Activated CD4-positive, alpha-beta memory T cell treated with anti-CD3 and anti-CD28 coated beads, Interleukin-2, amount 10 ng/mL, durations not matched to agents 7 days and 5 days (primary cell): ENCODE measurements at regions of chr10 and their contacts with region 1.

Region 1: DNA sequence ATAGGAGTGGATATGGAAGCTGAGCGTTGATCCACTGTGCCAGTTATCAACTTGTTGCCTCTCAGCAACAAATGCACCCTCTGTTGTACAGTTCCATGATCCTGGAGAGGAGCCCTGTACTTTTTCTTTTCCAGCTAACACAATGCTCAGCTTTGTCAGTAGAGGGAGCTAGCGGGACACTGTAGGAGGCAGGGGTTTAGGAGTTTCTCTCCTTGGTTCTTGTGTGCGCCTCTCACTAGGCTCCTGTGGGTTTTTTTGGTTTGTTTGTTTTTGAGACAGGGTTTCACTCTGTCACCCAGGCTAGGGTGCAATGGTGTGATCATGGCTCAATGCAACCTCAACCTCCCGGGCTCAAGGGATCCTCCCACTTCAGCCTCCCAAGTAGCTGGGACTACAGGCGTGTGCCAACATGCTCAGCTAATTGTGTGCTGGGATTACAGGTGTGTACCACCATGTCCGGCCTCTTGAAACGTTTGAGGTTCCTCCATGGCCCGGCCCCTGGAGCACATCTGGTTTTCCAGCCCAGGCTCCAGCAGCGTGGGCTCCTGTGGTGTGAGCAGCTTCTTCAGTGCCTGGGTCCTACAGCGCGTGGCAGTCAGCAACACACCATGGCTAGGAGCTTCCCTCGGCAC is 12.0 kb upstream of the MARVELD1 start:
- DNase-seq: peak; percentile 49
- H3K4me3 Mint-ChIP-seq: no peak overlapping the region
- H3K27ac Mint-ChIP-seq: no peak overlapping the region
- H3K4me1 Mint-ChIP-seq: peaks cover 1% of the 10 kb centered on the region
- H3K27me3 Mint-ChIP-seq: peaks cover 13% of the 10 kb centered on the region

Region 2: GRCh38 chr10:97686962-97687784 is 14.4 kb before region 1 on chr10 and contains the start of gene AVPI1:
- CTCF ChIA-PET with region 1: interaction called, 35 read pairs
- POLR2A ChIA-PET with region 1: interaction called, 8 read pairs
- DNase-seq: peak; percentile 95
- H3K4me3 Mint-ChIP-seq: peak within 1 kb of the TSS; percentile 75
- H3K27ac Mint-ChIP-seq: peak within 1 kb of the TSS; percentile 54
- H3K4me1 Mint-ChIP-seq: peaks cover 17% of the 10 kb centered on the region
- H3K27me3 Mint-ChIP-seq: peaks cover 3% of the 10 kb centered on the region
- total RNA-seq, gene AVPI1: 1.8 to 1.9 TPM

Region 3: DNA sequence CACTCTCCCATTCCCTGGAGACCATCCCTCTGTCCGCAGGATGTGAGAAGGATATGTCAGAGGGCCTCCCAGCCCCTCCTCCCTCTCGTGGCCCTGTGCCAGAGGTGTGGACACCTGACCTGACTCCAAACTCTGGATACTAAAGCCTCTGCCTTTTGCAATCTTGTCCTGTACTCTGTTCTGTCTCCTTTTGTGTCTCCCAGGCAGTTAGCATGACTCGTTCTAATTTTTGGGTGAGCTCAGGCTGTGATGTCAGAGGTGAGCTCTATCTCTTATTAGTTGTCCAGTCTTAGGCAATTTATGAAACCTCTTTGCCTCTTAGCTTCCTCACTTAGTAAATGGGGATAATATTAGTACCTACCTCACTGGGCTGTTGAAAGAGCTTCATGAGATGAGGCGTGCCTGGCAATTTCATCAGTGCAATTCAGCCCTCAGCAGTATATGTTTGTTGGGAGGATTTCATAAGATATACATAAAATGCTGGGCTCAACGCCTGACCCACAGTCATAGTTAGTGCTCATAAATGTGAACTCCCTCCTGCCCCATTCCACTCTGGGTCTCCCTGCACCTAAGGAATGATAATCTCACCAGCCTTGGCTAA is 22.9 kb after region 1 on chr10:
- CTCF ChIA-PET with region 1: interaction called, 111 read pairs
- POLR2A ChIA-PET with region 1: no interaction called
- DNase-seq: no peak
- H3K4me3 Mint-ChIP-seq: no peak overlapping the region
- H3K27ac Mint-ChIP-seq: no peak overlapping the region
- H3K4me1 Mint-ChIP-seq: peaks cover 6% of the 10 kb centered on the region
- H3K27me3 Mint-ChIP-seq: peaks cover 5% of the 10 kb centered on the region

Region 4: GRCh38 chr10:97736902-97737769 is 35.6 kb after region 1 on chr10 and contains the start of gene ZFYVE27:
- CTCF ChIA-PET with region 1: interaction called, 111 read pairs
- POLR2A ChIA-PET with region 1: interaction called, 3 read pairs
- DNase-seq: peak; percentile 95
- H3K4me3 Mint-ChIP-seq: peak within 1 kb of the TSS; percentile 85
- H3K27ac Mint-ChIP-seq: peak within 1 kb of the TSS; percentile 86
- H3K4me1 Mint-ChIP-seq: peaks cover 42% of the 10 kb centered on the region
- H3K27me3 Mint-ChIP-seq: no peaks in the 10 kb centered on the region
- total RNA-seq, gene ZFYVE27: 29.3 to 32.4 TPM

Region 5: GRCh38 chr10:97838091-97838490 is 136.5 kb after region 1 on chr10:
- CTCF ChIA-PET with region 1: no interaction called
- POLR2A ChIA-PET with region 1: no interaction called
- DNase-seq: no peak
- H3K4me3 Mint-ChIP-seq: no peak overlapping the region
- H3K27ac Mint-ChIP-seq: no peak overlapping the region
- H3K4me1 Mint-ChIP-seq: peaks cover 16% of the 10 kb centered on the region
- H3K27me3 Mint-ChIP-seq: peaks cover 8% of the 10 kb centered on the region

Region 6: GRCh38 chr10:98045785-98046389 is 344.3 kb after region 1 on chr10:
- CTCF ChIA-PET with region 1: interaction called, 15 read pairs
- POLR2A ChIA-PET with region 1: no interaction called
- DNase-seq: peak; percentile 65
- H3K4me3 Mint-ChIP-seq: no peak overlapping the region
- H3K27ac Mint-ChIP-seq: no peak overlapping the region
- H3K4me1 Mint-ChIP-seq: no peaks in the 10 kb centered on the region
- H3K27me3 Mint-ChIP-seq: peaks cover 29% of the 10 kb centered on the region